ENCODE measurements at regions of chr6 and their contacts with region 1.

Region 1: DNA sequence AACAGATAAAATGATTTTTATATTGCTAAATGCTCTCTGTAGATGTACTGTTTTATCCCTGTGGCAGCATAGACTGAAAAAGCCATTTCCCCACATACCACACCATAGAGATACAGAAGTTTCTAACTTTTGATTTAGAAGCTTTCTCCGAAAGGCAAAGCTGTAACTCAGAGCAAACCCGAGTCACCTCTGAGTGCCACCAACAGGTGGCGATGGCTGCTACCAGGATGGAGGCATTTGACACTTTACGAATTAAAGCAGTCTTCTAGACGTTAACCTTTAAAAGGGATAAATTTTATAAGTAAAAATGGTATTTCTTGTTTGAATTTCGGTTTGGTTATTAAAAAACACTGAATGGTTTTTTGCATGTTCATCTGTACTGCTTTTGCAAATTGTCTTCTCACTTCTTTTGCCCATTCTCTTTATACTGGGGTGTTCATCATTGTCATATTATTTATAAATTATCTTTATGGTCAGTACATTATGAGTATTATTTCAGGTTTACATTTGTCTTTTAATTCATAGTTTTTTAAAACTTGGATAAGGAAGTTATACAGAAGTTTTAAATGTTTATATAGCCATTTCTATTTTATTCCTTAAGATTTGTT is 201.0 kb upstream of the CEP162 start:
- DNase-seq: peak in 3 of 5 donors; percentile 33 to 52 (median 34)
- ATAC-seq: peak in 1 of 4 donors; percentile 43
- H3K4me3 ChIP-seq: no peak overlapping the region
- H3K27ac ChIP-seq: no peak overlapping the region
- H3K4me1 ChIP-seq: no peaks in the 10 kb centered on the region
- H3K27me3 ChIP-seq: peaks cover 0 to 5% (median 0%) of the 10 kb centered on the region in 9 donors
- CTCF ChIP-seq: peak in 11 of 12 donors; percentile 28 to 69 (median 45)
- POLR2A ChIP-seq: no peak

Region 2: DNA sequence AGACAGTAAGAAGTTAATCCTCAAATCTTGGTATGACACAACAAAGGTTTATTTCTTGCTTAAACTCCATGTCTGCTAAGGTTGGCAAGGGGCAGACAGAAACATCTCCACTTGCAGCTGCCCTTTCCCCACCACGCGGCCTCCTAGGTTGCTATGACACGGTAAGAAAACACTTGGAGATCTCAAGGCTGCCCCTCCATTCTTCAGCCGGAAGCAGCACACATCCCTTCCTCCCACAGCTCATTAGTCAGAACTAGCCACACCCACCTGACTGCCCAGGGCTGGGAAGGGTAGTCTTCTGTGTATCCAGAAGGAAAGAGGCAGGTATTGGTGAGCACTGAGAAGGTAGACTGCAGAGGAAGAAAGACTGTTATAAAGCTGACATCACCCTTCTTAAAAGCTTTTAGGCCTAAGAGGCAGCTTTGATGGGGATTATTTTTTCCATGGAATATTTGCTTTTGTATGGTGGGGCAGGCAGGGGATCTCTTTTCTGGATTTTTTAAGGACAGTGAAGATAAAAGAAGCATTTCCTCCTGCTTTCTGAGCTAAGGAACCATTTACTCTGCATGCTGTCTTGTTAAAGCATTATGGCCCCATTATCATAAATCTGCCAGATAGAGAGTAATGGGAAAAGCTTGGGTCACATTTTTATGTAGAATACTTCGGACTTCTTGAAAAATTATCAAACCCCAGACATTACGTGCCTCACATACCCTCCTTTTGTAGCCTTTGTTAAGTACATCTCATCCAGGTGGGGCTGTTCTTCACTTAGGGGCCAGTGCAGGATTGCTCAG is 353.2 kb before region 1 on chr6:
- intact Hi-C with region 1: no loop called
- DNase-seq: no peak
- ATAC-seq: no peak
- H3K4me3 ChIP-seq: no peak overlapping the region
- H3K27ac ChIP-seq: no peak overlapping the region
- H3K4me1 ChIP-seq: no peaks in the 10 kb centered on the region
- H3K27me3 ChIP-seq: no peaks in the 10 kb centered on the region
- CTCF ChIP-seq: no peak
- POLR2A ChIP-seq: no peak

Region 3: GRCh38 chr6:84536914-84537638 is 108.7 kb after region 1 on chr6:
- intact Hi-C with region 1: loop called in 1 of 10 experiments (anchors 10 kb)
- DNase-seq: no peak
- ATAC-seq: no peak
- H3K4me3 ChIP-seq: no peak overlapping the region
- H3K27ac ChIP-seq: no peak overlapping the region
- H3K4me1 ChIP-seq: no peaks in the 10 kb centered on the region
- H3K27me3 ChIP-seq: no peaks in the 10 kb centered on the region
- CTCF ChIP-seq: no peak
- POLR2A ChIP-seq: no peak

Region 4: GRCh38 chr6:84601366-84601765 is 173.0 kb after region 1 on chr6:
- intact Hi-C with region 1: no loop called
- DNase-seq: no peak
- ATAC-seq: no peak
- H3K4me3 ChIP-seq: no peak overlapping the region
- H3K27ac ChIP-seq: no peak overlapping the region
- H3K4me1 ChIP-seq: no peaks in the 10 kb centered on the region
- H3K27me3 ChIP-seq: no peaks in the 10 kb centered on the region
- CTCF ChIP-seq: no peak
- POLR2A ChIP-seq: no peak

Region 5: DNA sequence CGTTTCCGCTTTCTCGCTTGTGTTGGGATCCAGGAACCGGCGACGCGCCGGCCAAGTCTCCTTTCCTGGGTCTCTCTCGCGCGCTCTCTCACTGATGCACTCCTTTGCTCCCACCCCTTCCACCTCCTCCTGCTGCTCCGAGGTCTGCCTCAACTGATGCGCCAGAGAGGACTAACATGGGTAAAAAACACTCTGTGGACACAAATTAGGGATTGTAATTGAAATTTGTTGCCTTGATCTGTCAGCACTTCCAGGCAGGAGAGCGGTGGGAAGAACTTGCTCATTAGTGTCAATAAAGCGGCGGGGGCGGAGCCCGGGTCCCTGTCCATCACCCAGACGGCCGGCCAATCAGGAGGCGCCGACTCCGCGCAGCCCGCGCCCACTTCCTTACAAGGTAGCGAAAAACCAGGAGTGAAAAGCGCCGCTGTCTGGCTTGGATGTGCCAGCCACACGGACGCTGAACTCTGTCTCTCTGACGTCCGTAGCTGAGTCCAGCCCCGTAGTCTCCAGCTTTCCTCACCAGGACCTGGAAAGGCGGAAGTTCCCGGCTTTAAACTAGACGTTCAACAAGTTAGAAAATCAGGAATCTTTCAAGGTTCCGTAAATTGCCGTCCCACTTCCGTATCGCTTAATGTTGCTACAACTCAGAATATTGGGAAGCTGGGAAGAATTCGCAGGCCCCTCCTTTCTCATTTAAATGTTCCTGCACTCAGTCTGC is 336.1 kb after region 1 on chr6 and contains the start of gene TBX18:
- intact Hi-C with region 1: loop called in 2 of 10 experiments (anchors 5 to 10 kb)
- DNase-seq: peak; percentile 88 to 94 (median 91)
- ATAC-seq: peak; percentile 87 to 94 (median 92)
- H3K4me3 ChIP-seq: peak within 1 kb of the TSS; percentile 20 to 75 (median 62)
- H3K27ac ChIP-seq: peak within 1 kb of the TSS; percentile 61 to 91 (median 84)
- H3K4me1 ChIP-seq: peaks cover 0 to 19% (median 0%) of the 10 kb centered on the region in 12 donors
- H3K27me3 ChIP-seq: peaks cover 9 to 96% (median 78%) of the 10 kb centered on the region in 9 donors
- CTCF ChIP-seq: peak in 1 of 12 donors; percentile 20
- POLR2A ChIP-seq: peak in 1 of 2 donors; percentile 20
- total RNA-seq, gene TBX18: 1.3 to 14.9 (median 3.8) TPM

Region 6: DNA sequence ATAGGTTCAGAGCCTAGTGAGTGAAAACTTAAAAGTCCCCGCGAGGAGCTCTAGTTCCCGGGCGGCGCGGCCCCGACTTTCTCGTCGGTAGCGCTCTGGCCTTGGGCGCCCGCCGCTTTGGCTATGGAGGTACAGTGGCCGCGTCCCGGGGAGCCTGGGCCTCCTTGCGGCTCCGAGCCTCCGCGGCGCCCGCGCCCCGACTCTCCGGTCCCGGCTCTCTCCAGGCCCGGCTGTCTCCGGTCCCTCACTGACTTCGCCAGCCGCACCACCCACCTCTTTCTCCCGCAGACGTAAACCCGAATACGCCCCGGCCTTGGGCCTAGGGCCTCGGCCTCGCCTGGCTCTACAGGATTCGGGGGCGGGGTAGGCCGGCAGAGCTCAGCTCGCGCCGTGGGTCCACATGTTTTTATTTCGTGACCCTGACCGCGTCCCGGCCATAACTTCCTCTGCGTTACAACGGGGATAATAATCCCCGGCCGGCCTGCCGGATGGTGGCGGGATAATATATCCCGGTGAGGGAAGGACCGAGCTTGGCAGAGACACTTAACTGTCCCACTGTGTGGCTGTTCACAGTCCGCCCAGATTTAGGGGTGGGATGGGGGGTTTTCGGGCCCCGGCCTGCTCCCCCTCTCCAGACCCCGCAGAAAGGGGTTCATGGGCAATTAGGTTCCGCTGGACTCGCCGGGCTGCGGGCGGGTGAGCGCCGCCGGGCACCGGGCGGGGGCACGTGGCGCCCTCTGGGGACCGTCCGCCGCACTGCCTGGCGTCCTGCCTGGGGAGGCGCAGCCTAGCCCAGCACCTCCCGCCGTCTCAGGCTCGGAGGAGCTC is 346.0 kb after region 1 on chr6:
- intact Hi-C with region 1: loop called in 6 of 10 experiments (anchors 5 to 10 kb)
- DNase-seq: peak; percentile 25 to 72 (median 47)
- ATAC-seq: peak; percentile 36 to 86 (median 80)
- H3K4me3 ChIP-seq: peak overlapping the region; percentile 23 to 65 (median 52)
- H3K27ac ChIP-seq: peak overlapping the region; percentile 30 to 80 (median 66)
- H3K4me1 ChIP-seq: peaks cover 0 to 19% (median 2%) of the 10 kb centered on the region in 12 donors
- H3K27me3 ChIP-seq: peaks cover 21 to 95% (median 61%) of the 10 kb centered on the region in 9 donors
- CTCF ChIP-seq: peak; percentile 20 to 62 (median 46)
- POLR2A ChIP-seq: no peak

Region 7: DNA sequence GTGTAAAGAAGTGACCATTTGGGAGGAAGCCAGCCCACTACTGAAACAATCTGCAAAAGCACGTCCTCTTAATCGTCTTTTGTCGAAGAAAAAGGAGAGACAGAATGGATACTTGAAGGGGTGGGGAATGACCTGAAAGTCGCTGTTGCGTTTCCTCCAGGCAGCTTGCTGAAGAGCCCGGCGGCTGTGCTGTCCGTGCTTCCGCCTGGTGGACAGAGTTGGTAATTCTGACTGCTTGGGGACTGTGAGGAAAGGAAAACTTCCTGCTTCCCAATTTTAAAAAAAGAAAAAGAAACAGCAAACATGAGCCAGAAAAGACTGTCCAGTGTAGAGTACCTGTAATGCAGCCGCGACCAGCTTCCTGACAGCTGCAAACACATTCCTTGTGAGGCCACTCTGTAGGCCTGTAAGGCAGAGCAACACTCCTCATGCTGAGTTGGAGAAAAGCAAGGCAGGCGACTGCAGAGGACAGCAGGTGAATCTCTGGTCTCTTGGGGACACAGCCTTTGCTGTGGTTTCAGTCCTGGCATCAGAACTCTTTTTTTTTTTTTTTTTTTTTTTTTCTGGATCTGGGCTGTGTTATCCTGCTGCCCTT is 587.1 kb after region 1 on chr6:
- intact Hi-C with region 1: loop called in 2 of 10 experiments (anchors 5 to 10 kb)
- DNase-seq: peak in 4 of 5 donors; percentile 30 to 57 (median 42)
- ATAC-seq: peak in 2 of 4 donors; percentile 66 to 76
- H3K4me3 ChIP-seq: no peak overlapping the region
- H3K27ac ChIP-seq: no peak overlapping the region
- H3K4me1 ChIP-seq: no peaks in the 10 kb centered on the region
- H3K27me3 ChIP-seq: no peaks in the 10 kb centered on the region
- CTCF ChIP-seq: peak; percentile 27 to 71 (median 48)
- POLR2A ChIP-seq: no peak

Region 8: GRCh38 chr6:85323435-85324040 is 895.1 kb after region 1 on chr6:
- intact Hi-C with region 1: loop called in 2 of 10 experiments (anchors 10 kb)
- DNase-seq: peak in 4 of 5 donors; percentile 32 to 56 (median 47)
- ATAC-seq: peak in 3 of 4 donors; percentile 48 to 63 (median 61)
- H3K4me3 ChIP-seq: no peak overlapping the region
- H3K27ac ChIP-seq: no peak overlapping the region
- H3K4me1 ChIP-seq: no peaks in the 10 kb centered on the region
- H3K27me3 ChIP-seq: peaks cover 0 to 3% (median 0%) of the 10 kb centered on the region in 9 donors
- CTCF ChIP-seq: peak; percentile 53 to 84 (median 66)
- POLR2A ChIP-seq: no peak